Astrocyte of the cerebellum (primary cell): ENCODE measurements at regions of chr12 and their contacts with region 1.

Region 1: DNA sequence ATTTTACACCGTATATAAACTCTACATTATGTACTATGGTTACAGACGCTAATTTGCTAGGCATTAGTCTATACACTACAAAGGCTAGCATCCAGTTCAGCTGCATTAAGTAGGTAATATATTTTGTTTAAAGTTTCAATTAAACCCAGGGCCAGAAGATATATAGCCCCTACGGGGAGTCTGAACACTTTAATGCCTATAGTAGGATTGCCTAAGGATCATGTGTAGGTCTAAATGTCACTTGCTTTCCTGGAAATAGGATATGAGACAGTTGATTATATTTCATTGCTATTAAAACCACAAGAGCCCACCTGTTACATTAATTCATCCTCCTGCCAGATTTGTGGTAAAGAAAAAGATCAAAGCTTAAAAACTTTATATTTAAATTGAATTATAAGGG is 286.9 kb downstream of the TMTC2 start:
- DNase-seq: no peak
- H3K4me3 ChIP-seq: no peak overlapping the region
- CTCF ChIP-seq: no peak

Region 2: DNA sequence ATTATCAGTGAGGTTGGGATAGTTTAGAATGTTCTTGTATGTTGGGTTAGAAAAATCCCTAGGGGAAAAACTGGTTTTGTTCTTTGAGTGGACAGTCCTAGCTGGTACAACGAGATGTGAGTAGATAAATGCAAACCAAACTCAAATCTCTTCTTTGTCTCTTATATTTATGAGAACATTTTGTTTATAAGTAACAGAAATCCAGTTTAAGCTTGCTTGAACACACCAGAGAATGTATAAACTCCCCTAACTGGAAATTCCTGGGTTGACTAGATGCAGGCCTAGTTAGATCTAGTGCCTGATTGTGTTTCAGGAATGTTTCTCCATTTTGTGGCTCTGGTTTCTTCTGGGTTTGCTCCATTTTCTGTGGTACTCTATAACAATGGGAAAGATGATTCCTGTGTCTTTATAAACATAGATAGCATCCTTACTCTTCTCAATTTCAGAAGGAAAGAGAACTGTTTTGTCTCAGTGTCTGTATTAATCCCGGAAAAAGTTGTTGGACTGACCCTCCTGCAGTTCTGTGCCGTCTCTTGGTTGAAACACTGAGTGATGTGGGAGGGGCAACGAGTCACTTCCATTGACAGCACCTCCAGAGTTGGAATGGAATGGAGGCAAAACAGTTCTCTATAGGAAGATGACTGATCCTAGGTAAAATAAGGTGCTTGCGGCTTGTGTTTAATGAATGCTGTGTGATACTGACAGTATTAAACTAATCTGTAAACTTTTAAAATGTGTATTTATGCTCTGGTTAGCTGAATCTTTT is 42.1 kb before region 1 on chr12:
- in situ Hi-C with region 1: loop called (anchors 5 kb)
- DNase-seq: no peak
- H3K4me3 ChIP-seq: no peak overlapping the region
- CTCF ChIP-seq: no peak